ENCODE measurements at regions of chr3 and their contacts with region 1.

Region 1: DNA sequence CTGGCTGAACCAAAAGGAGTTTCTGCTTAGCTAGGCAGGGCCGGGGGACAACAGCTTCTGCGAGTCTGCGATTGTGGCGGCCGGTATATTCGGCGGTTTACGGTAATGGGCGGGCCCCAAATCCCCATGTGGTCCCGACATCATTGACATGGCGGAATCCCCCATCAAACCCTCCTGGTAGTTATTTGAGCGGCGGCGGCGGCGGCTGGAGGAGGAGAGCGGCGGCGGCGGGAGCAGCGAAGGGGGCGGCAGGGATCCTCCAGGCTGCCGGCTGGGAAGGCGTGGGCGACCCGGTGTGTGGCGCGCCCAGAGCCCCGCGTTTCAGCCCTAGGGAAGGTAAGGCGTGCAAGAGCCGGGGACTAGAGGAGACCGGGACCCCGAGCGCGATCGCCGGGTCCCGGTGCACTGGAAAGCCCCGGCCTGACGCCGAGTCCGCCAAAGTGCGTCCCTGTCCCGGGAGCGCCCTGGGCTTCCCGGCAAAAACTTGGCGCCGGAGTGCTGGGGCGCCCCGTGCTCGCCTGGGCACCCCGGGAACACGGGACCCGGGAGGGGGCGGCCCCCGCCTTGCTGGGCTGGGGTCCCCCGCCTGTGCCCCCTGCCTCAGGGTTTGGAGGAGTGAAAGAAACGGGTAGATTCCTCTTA is at the start of gene FNDC3B:
- DNase-seq: peak; percentile 91 to 96 (median 94)
- H3K4me3 ChIP-seq: peak within 1 kb of the TSS; percentile 91
- H3K27ac ChIP-seq: peak within 1 kb of the TSS; percentile 97
- H3K4me1 ChIP-seq: peaks cover 7% of the 10 kb centered on the region
- H3K27me3 ChIP-seq: no peaks in the 10 kb centered on the region
- CTCF ChIP-seq: no peak
- EP300 ChIP-seq: peak; percentile 64
- POLR2A ChIP-seq: peak; percentile 88
- total RNA-seq, gene FNDC3B: 93.2 to 198 (median 110) TPM

Region 2: DNA sequence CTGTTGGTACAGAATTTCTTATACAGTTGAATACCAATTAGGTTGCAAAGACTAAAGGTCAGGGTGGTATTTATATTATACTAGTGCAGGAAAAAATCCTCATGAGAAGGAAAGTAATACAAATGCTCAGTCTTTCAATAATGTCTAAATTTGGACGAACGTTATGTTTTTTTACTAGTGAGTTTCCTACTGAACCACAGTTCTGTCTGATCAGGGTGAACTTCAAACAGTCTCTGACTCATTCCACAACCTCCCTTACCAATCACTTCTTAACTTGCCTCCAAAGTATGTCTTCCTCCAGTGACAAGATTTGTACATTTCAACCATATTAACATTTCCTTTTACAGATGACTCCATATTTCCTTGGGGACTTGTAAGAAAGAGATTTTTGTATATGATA is 193.0 kb before region 1 on chr3:
- intact Hi-C with region 1: loop called in 2 of 4 experiments (anchors 10 kb)
- DNase-seq: no peak
- H3K4me3 ChIP-seq: no peak overlapping the region
- H3K27ac ChIP-seq: no peak overlapping the region
- H3K4me1 ChIP-seq: peaks cover 5% of the 10 kb centered on the region
- H3K27me3 ChIP-seq: no peaks in the 10 kb centered on the region
- CTCF ChIP-seq: no peak
- EP300 ChIP-seq: no peak
- POLR2A ChIP-seq: no peak

Region 3: GRCh38 chr3:172153335-172153861 is 113.8 kb after region 1 on chr3:
- intact Hi-C with region 1: loop called in 1 of 4 experiments (anchors 10 kb)
- DNase-seq: peak; percentile 83 to 90 (median 86)
- H3K4me3 ChIP-seq: no peak overlapping the region
- H3K27ac ChIP-seq: peak overlapping the region; percentile 72 to 73
- H3K4me1 ChIP-seq: peaks cover 17% of the 10 kb centered on the region
- H3K27me3 ChIP-seq: no peaks in the 10 kb centered on the region
- CTCF ChIP-seq: no peak
- EP300 ChIP-seq: no peak
- POLR2A ChIP-seq: peak; percentile 25

Region 4: DNA sequence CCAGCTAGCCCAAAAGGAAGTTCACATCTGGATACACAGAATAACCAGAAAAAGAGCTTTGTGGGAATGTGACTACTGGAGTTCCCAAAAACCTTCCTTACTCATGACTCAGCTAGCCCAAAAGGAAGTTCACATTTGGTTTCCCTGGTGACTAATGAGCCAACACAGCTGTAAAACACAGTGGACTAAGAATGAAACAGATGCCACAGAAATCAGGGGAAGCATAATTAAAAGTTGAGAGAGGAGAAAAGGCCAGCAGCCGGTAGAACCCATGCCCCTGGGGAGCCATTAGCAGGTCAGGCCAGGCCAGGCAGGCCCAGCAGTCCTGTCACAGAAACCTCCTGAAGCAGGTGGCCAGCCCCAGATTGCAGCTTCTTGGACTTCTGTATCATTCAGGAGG is 278.4 kb after region 1 on chr3:
- intact Hi-C with region 1: loop called in 1 of 4 experiments (anchors 10 kb)
- DNase-seq: peak in 4 of 5 donors; percentile 34 to 66 (median 56)
- H3K4me3 ChIP-seq: no peak overlapping the region
- H3K27ac ChIP-seq: peak overlapping the region in 1 of 2 donors; percentile 14
- H3K4me1 ChIP-seq: peaks cover 30% of the 10 kb centered on the region
- H3K27me3 ChIP-seq: no peaks in the 10 kb centered on the region
- CTCF ChIP-seq: no peak
- EP300 ChIP-seq: peak; percentile 8
- POLR2A ChIP-seq: no peak

Measured in ovary (tissue), 10 donors.